Heart left ventricle (tissue), 16 donors: ENCODE measurements at regions of chr18 and their contacts with region 1.

Region 1: DNA sequence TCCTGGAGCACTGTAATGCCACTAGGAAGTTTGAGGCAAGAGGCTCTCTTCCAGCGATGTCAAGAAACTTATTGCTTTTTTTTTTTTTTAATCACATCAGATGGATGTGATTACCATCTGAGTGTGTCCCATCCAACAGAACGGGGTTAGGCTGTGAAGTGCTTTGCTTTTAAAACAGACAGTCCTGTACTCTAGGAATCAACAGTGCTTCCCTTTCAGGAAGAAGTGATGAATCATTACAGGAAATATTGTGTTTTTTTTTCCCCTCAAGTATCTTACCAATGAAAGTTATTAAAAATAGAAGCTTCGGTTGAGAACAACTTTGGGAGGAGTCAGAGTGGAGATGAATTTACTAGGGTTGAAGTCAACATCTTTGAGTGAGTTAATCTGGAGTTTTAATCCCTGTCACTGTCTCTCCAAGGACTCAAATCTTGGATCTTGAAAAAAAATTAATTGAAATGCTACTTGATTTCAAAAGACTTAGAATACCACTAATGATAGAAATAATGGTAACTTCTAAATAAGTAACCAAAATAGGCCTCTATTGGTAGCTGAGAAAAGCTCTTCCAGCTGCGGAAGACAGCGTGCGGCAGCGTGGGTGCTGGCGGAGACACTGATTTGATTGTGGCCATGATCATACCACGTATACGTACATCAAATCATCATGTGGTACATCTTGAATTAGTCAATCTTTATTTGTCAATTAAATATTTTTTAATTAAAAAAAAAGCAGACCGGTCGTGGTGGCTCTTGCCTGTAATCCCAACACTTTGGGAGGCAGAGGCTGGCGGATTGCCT is 45.5 kb downstream of the GATA6 start:
- DNase-seq: no peak
- ATAC-seq: peak in 3 of 4 donors; percentile 25 to 36 (median 29)
- H3K4me3 ChIP-seq: no peak overlapping the region
- H3K27ac ChIP-seq: peak overlapping the region in 4 of 12 donors; percentile 23 to 42 (median 30)
- H3K4me1 ChIP-seq: peaks cover 0 to 56% (median 27%) of the 10 kb centered on the region in 12 donors
- H3K27me3 ChIP-seq: no peaks in the 10 kb centered on the region
- CTCF ChIP-seq: no peak
- POLR2A ChIP-seq: no peak

Region 2: DNA sequence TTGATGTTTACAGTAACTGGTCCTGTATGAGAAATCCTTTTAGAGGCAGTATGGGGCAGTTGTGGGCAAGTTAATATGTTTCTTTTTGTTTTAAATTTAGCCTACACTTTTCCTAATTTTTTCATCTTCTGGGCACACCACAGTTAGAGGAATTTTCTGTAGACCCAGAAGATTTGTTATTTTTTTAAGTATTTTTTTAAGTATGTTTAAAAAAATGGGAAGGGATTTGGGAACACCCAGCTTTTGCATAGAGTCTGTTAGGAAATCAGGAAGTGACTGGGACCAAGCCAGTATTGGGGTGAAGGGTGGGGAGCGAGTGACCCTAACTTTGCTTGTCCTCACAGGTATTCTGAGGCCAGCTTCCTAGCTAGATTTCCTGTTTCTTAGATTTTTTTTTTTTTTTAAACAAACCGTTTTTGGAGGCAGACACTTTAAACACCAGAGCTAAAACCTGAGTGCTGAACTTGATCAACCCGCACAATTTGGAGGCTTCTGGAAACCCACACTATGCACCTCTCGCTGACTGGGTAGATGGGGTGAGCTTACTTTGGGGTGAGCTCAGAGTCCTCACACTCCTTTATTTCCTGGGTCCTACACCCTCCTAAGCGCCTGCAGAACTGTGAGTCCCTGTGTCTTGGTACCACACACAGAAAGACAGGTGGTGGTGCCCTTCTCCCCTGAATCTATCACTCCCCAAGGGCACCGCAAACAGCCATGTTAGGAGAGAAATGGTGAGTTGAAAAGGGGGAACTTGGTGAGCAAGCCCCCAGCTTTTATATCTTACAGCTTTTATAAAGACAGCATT is 40.4 kb before region 1 on chr18:
- intact Hi-C with region 1: no loop called
- DNase-seq: peak in 1 of 5 donors; percentile 49
- ATAC-seq: peak; percentile 23 to 58 (median 38)
- H3K4me3 ChIP-seq: peak overlapping the region; percentile 51 to 97 (median 84)
- H3K27ac ChIP-seq: peak overlapping the region; percentile 77 to 100 (median 97)
- H3K4me1 ChIP-seq: peaks cover 0 to 14% (median 4%) of the 10 kb centered on the region in 12 donors
- H3K27me3 ChIP-seq: peaks cover 0 to 54% (median 0%) of the 10 kb centered on the region in 9 donors
- CTCF ChIP-seq: peak in 2 of 12 donors; percentile 12 to 18
- POLR2A ChIP-seq: no peak

Region 3: DNA sequence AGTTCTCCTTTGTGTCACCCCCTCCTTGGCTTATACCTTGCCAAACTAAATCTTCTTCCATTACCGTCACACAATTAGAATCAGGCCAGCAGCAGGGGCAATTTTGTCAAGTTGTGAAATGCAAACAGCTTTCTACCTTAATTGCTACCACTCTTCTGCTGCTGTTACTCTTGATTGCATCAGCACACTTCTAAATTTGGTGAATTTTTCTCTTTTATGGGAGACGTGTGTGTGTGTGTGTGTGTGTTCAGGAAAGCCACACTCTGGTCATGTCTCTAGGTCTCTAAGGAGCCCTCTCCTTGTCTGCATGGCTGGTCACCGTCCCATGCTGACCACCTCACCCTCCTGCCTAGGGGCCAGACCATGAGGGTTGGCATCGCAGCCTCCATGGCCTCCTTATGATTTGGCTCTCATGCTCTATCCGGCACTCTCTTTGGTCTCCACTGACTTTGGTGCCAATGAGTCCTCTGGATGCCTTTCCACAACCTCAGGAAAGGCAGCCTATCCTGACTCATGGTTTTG is 42.2 kb after region 1 on chr18:
- intact Hi-C with region 1: loop called in 3 of 10 experiments (anchors 5 to 10 kb)
- DNase-seq: no peak
- ATAC-seq: no peak
- H3K4me3 ChIP-seq: no peak overlapping the region
- H3K27ac ChIP-seq: no peak overlapping the region
- H3K4me1 ChIP-seq: peaks cover 0 to 43% (median 11%) of the 10 kb centered on the region in 12 donors
- H3K27me3 ChIP-seq: no peaks in the 10 kb centered on the region
- CTCF ChIP-seq: no peak
- POLR2A ChIP-seq: no peak